GM12878 (cell line): ENCODE measurements at regions of chr12 and their contacts with region 1.

Region 1: GRCh38 chr12:29103539-29103974 is 45.5 kb upstream of the FAR2 start:
- DNase-seq: peak; percentile 75
- ATAC-seq: peak; percentile 99
- H3K4me3 ChIP-seq: peak overlapping the region; percentile 19; the same call in 1 of the 2 replicates
- H3K27ac ChIP-seq: no peak overlapping the region
- H3K4me1 ChIP-seq: peaks cover 14% of the 10 kb centered on the region
- H3K27me3 ChIP-seq: no peaks in the 10 kb centered on the region
- CTCF ChIP-seq: no peak
- EP300 ChIP-seq: peak in 1 of 2 experiments; percentile 64; a peak in 1 of 4 replicates
- POLR2A ChIP-seq: no peak
- RAD21 ChIP-seq: no peak

Region 2: DNA sequence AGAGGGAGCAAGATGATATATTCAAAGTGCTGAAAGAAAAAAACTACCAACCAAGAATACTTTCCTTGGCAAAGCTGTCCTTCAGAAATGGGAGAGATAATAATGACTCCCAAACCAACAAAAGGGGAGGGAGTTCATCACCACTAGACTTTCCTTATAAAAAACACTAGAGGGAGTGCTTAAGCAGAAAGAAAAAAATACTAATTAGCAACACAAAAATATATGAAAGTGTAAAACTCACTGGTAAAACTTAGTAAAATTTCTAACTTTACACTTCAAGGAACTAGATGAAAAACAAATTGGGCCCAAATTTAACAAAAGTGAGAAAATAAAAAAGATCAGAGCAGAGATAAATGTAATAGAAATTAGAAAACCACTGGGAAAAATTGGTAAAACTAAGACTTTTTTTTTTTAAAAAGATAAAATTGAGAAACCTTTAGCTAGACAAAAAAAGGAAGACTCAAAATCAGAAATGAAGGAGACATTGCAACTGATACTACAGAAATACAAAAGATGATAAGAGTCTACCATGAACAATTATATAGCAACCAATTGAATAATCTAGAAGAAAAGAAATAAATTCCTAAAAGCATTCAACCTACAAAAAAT is 14.8 kb before region 1 on chr12:
- CTCF ChIA-PET with region 1: interaction called, 20 read pairs
- POLR2A ChIA-PET with region 1: no interaction called
- RAD21 ChIA-PET with region 1: no interaction called
- SMC1A ChIA-PET with region 1: interaction called, 4 read pairs
- in situ Hi-C with region 1: no loop called
- intact Hi-C with region 1: no loop called
- DNase-seq: no peak
- ATAC-seq: 0 out of 3 replicates have a peak, but pooled peaks have one; percentile 21
- H3K4me3 ChIP-seq: no peak overlapping the region
- H3K27ac ChIP-seq: no peak overlapping the region
- H3K4me1 ChIP-seq: peaks cover 6% of the 10 kb centered on the region; the same call in 1 of the 2 replicates
- H3K27me3 ChIP-seq: no peaks in the 10 kb centered on the region
- CTCF ChIP-seq: peak; percentile 27 to 35 (median 35); a peak in 3 of 6 replicates
- EP300 ChIP-seq: no peak
- POLR2A ChIP-seq: no peak
- RAD21 ChIP-seq: peak; percentile 61

Region 3: DNA sequence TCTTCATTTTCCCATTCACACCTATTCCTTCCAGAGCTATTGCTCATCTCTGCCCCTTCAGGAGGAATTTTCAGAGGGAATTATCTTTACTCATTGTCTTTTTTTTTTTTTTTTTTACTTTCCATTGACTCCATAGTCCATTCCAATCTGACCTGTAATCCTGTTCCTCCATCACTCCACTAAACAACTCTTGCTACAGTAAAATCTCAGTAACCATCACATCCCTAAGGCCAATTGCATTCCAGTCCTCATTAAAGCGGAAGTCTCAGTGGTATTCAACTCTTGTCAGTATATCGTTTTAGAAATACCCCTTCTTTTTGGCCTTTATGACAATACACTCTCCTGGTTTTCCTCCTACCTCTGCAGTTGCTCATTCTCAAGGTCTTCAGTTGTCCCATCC is 79.3 kb after region 1 on chr12:
- CTCF ChIA-PET with region 1: no interaction called
- POLR2A ChIA-PET with region 1: no interaction called
- RAD21 ChIA-PET with region 1: no interaction called
- SMC1A ChIA-PET with region 1: no interaction called
- in situ Hi-C with region 1: no loop called
- intact Hi-C with region 1: no loop called
- DNase-seq: no peak
- ATAC-seq: no peak
- H3K4me3 ChIP-seq: no peak overlapping the region
- H3K27ac ChIP-seq: no peak overlapping the region
- H3K4me1 ChIP-seq: no peaks in the 10 kb centered on the region
- H3K27me3 ChIP-seq: no peaks in the 10 kb centered on the region
- CTCF ChIP-seq: no peak
- EP300 ChIP-seq: no peak
- POLR2A ChIP-seq: no peak
- RAD21 ChIP-seq: no peak